ENCODE measurements at regions of chr14 and their contacts with region 1.

Region 1: DNA sequence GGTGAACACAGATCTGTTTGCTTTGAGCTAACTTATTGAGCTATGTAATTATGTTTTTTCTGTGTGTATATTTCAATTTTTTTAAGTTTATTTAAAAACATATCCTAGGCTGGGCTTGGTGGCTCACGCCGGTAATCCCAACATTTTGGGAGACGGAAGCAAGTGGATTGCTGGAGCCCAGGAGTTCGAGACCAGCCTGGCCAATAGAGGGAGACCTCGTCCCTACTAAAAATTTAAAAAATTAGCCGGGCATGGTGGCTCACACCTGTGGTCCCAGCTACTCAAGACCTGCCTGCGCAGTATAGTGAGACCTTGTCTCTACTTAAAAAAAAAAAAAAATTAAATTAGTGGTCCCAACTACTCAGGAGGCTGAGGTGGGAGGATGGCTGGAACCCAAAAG is 16.2 kb upstream of the RNASE1 start:
- DNase-seq: peak in 1 of 4 experiments; percentile 12
- ATAC-seq: no peak
- H3K4me3 ChIP-seq: no peak overlapping the region
- H3K27ac ChIP-seq: no peak overlapping the region
- H3K4me1 ChIP-seq: peaks cover 5 to 26% of the 10 kb centered on the region in 2 experiments; a peak in 4 of 5 replicates
- H3K27me3 ChIP-seq: no peaks in the 10 kb centered on the region; a peak in 1 of 5 replicates
- CTCF ChIP-seq: peak; percentile 15 to 38 (median 23); a peak in 2 of 6 replicates
- EP300 ChIP-seq: no peak
- POLR2A ChIP-seq: no peak
- RAD21 ChIP-seq: no peak

Region 2: DNA sequence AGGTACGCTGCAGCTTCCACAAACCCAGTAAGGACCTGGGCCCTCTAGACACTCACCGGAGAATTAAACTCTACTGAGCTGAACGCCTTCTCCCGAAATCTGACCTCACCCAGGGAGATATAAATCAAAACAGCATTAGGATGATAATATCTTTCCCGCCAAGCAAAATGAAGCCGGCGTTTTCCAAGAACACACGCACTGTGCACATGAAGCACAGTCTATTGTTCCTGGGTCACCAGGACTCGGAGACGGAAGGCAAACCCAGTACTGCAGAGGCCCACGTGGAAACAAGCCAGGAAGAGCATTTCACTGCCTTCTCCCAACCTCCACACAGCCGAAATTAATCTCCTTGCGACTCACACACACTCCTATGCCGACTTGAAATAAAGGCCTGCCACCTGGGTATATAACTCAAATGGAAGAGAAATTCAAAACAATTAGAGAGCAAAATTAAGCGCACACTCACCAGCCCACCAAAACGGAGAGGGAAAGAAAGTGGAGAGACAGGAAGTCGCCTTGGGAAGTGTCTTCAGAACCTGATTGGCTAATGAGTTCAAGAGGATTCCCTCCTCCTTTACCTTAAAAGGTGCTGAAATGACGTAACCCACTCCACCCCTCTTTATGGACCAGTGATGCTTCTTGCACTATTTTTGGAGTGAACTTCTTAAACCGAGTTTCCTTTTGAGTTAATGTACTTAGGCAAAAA is 485.9 kb before region 1 on chr14 and contains the start of gene CCNB1IP1:
- CTCF ChIA-PET with region 1: no interaction called
- POLR2A ChIA-PET with region 1: no interaction called
- in situ Hi-C with region 1: no loop called
- intact Hi-C with region 1: loop called (anchors 10 kb)
- DNase-seq: peak; percentile 70 to 91 (median 82)
- ATAC-seq: peak; percentile 91
- H3K4me3 ChIP-seq: peak within 1 kb of the TSS; percentile 87
- H3K27ac ChIP-seq: peak within 1 kb of the TSS; percentile 90
- H3K4me1 ChIP-seq: peaks cover 0 to 11% of the 10 kb centered on the region in 2 experiments; a peak in 2 of 5 replicates
- H3K27me3 ChIP-seq: no peaks in the 10 kb centered on the region
- CTCF ChIP-seq: no peak
- EP300 ChIP-seq: no peak
- POLR2A ChIP-seq: peak; percentile 94
- RAD21 ChIP-seq: no peak
- polyA plus RNA-seq, gene CCNB1IP1: 80.7 to 81.0 TPM

Region 3: DNA sequence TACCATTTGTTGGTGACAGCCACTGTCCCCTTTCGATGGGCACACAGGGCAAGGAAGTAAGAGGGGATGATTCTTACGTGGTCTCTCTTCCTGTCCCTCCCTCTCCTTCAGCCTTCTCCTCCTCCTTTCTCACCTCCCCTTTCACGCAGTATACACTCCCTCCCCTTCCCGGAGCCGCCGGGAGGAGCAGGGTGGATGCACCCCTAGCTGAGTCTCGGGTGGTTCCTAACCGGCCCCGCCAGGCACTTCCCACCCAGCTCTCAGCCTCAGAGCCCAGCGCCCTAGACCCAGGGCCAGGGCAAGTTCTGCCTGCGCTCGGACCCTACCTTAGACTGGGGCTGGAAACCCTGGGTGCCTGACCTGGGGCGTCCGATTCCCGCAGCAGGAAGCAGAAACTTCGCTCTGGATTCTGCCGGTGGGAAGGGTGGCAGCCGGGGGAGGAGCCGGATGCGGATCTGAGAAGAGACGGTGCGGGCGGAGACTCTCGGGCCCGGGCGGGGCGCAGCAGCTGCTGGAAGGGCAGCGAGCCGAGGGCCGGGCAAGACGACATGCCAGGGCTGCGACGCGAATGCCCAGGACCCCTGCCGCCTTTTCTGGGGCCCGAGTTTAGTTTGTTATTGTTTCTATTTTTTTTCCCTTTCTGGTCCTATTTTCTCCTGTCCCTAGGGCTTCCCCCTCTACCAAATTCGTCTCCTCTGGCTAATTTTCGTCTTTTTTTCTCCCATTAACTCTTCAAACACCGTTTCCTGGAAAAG is 405.6 kb before region 1 on chr14 and contains the start of gene TEP1:
- CTCF ChIA-PET with region 1: no interaction called
- POLR2A ChIA-PET with region 1: no interaction called
- in situ Hi-C with region 1: no loop called
- intact Hi-C with region 1: no loop called
- DNase-seq: peak; percentile 60 to 77 (median 66)
- ATAC-seq: peak; percentile 94
- H3K4me3 ChIP-seq: peak within 1 kb of the TSS; percentile 93
- H3K27ac ChIP-seq: peak within 1 kb of the TSS; percentile 73
- H3K4me1 ChIP-seq: peaks cover 6 to 13% of the 10 kb centered on the region in 2 experiments; a peak in 4 of 5 replicates
- H3K27me3 ChIP-seq: no peaks in the 10 kb centered on the region
- CTCF ChIP-seq: no peak
- EP300 ChIP-seq: no peak
- POLR2A ChIP-seq: peak; percentile 77
- RAD21 ChIP-seq: no peak
- polyA plus RNA-seq, gene TEP1: 1.0 to 1.3 TPM

Region 4: GRCh38 chr14:20609215-20610001 is 209.5 kb before region 1 on chr14:
- CTCF ChIA-PET with region 1: no interaction called
- POLR2A ChIA-PET with region 1: no interaction called
- in situ Hi-C with region 1: no loop called
- intact Hi-C with region 1: no loop called
- DNase-seq: peak; percentile 59 to 86 (median 65)
- ATAC-seq: peak; percentile 12
- H3K4me3 ChIP-seq: peak overlapping the region; percentile 80
- H3K27ac ChIP-seq: peak overlapping the region; percentile 64
- H3K4me1 ChIP-seq: peaks cover 0 to 14% of the 10 kb centered on the region in 2 experiments; a peak in 2 of 5 replicates
- H3K27me3 ChIP-seq: no peaks in the 10 kb centered on the region
- CTCF ChIP-seq: peak; percentile 93 to 100 (median 99)
- EP300 ChIP-seq: peak; percentile 35
- POLR2A ChIP-seq: no peak
- RAD21 ChIP-seq: peak; percentile 96 to 97

Region 5: GRCh38 chr14:20723488-20723887 is 95.4 kb before region 1 on chr14:
- CTCF ChIA-PET with region 1: no interaction called
- POLR2A ChIA-PET with region 1: no interaction called
- in situ Hi-C with region 1: no loop called
- intact Hi-C with region 1: no loop called
- DNase-seq: peak in 1 of 4 experiments; percentile 10
- ATAC-seq: peak; percentile 49; the same call in 1 of the 3 replicates
- H3K4me3 ChIP-seq: no peak overlapping the region
- H3K27ac ChIP-seq: no peak overlapping the region
- H3K4me1 ChIP-seq: peaks cover 0 to 6% of the 10 kb centered on the region in 2 experiments; a peak in 2 of 5 replicates
- H3K27me3 ChIP-seq: peaks cover 22 to 37% of the 10 kb centered on the region in 2 experiments; a peak in 4 of 5 replicates
- CTCF ChIP-seq: no peak
- EP300 ChIP-seq: no peak
- POLR2A ChIP-seq: no peak
- RAD21 ChIP-seq: no peak

Region 6: DNA sequence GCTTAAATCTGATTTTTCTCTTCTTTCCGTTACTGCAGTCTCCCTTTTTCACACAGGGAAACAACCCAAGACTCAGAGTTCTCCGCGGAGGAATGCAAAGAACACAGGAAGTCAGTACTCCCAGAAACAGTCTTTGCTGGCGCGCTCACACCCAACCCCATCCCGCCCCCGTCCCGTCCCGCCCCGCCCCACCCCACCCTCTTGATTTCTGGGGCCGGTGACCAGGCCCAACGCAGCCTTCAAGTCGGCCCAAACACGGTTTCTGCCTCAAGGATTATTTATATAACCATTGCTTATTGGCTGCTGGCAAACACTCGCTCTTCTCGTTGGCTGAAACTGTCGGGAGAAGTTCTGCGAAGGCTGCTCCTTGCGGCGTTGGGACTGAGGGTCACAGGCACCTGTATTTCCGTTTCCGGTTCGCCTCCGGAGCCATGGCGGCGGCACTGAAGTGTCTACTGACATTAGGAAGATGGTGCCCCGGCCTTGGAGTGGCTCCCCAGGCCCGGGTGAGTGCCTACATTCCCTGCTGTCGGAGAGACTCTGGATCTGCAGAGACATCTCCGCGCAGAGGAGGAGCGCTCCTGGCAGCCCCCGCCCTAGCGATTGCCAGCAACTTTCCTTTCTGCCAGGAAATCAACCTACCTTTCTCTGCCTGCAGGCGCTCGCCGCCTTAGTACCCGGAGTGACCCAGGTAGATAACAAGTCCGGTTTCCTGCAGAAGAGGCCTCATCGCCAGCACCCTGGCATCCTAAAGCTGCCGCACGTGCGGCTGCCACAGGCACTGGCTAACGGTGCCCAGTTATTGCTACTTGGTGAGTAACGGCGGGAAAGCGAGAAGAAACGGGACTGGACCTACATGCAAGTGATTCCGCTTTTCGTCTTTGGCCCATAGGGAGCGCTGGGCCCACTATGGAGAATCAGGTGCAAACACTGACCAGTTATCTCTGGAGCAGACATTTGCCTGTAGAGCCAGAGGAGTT is 171.0 kb after region 1 on chr14 and contains the start of gene METTL17:
- CTCF ChIA-PET with region 1: no interaction called
- POLR2A ChIA-PET with region 1: no interaction called
- in situ Hi-C with region 1: no loop called
- intact Hi-C with region 1: no loop called
- DNase-seq: peak; percentile 72 to 93 (median 80)
- ATAC-seq: peak; percentile 96
- H3K4me3 ChIP-seq: peak within 1 kb of the TSS; percentile 74
- H3K27ac ChIP-seq: peak within 1 kb of the TSS; percentile 79
- H3K4me1 ChIP-seq: peaks cover 7 to 10% of the 10 kb centered on the region in 2 experiments; a peak in 3 of 5 replicates
- H3K27me3 ChIP-seq: no peaks in the 10 kb centered on the region
- CTCF ChIP-seq: peak; percentile 54 to 62 (median 59)
- EP300 ChIP-seq: no peak
- POLR2A ChIP-seq: peak; percentile 85
- RAD21 ChIP-seq: peak in 1 of 2 experiments; percentile 37; a peak in 2 of 4 replicates
- polyA plus RNA-seq, gene METTL17: 90.0 to 150 TPM